ENCODE measurements at regions of chr7 and their contacts with region 1.

Region 1: GRCh38 chr7:156969972-156970420 is 20.5 kb downstream of the NOM1 start:
- DNase-seq: no peak
- H3K4me3 Mint-ChIP-seq: no peak overlapping the region
- H3K27ac Mint-ChIP-seq: no peak overlapping the region
- H3K4me1 Mint-ChIP-seq: no peaks in the 10 kb centered on the region
- H3K27me3 Mint-ChIP-seq: no peaks in the 10 kb centered on the region

Region 2: GRCh38 chr7:156725077-156725476 is 244.9 kb before region 1 on chr7:
- CTCF ChIA-PET with region 1: no interaction called
- POLR2A ChIA-PET with region 1: no interaction called
- DNase-seq: no peak
- H3K4me3 Mint-ChIP-seq: no peak overlapping the region
- H3K27ac Mint-ChIP-seq: no peak overlapping the region
- H3K4me1 Mint-ChIP-seq: peaks cover 3% of the 10 kb centered on the region
- H3K27me3 Mint-ChIP-seq: no peaks in the 10 kb centered on the region

Region 3: DNA sequence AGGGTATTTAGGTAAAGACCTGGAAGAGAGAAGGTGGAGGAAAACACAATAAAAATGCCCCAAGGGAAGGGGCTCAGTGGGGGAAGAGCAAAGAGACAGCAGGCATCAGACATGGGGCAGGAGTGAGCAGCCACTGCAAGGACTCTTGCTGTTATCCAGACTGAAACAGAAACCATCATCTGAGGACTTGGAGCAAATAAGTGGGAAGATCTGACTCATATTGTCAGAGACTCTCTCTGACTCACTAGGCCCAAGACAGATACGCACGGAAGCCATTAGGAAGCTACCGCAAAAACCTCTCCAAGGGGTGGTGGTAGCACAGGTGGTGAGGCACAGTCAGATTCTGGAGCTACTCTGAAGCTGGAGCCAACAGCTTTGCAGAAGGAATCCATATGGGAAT is 218.7 kb before region 1 on chr7:
- CTCF ChIA-PET with region 1: no interaction called
- POLR2A ChIA-PET with region 1: no interaction called
- DNase-seq: peak; percentile 70
- H3K4me3 Mint-ChIP-seq: no peak overlapping the region
- H3K27ac Mint-ChIP-seq: peak overlapping the region; percentile 33
- H3K4me1 Mint-ChIP-seq: peaks cover 10% of the 10 kb centered on the region
- H3K27me3 Mint-ChIP-seq: no peaks in the 10 kb centered on the region

Region 4: DNA sequence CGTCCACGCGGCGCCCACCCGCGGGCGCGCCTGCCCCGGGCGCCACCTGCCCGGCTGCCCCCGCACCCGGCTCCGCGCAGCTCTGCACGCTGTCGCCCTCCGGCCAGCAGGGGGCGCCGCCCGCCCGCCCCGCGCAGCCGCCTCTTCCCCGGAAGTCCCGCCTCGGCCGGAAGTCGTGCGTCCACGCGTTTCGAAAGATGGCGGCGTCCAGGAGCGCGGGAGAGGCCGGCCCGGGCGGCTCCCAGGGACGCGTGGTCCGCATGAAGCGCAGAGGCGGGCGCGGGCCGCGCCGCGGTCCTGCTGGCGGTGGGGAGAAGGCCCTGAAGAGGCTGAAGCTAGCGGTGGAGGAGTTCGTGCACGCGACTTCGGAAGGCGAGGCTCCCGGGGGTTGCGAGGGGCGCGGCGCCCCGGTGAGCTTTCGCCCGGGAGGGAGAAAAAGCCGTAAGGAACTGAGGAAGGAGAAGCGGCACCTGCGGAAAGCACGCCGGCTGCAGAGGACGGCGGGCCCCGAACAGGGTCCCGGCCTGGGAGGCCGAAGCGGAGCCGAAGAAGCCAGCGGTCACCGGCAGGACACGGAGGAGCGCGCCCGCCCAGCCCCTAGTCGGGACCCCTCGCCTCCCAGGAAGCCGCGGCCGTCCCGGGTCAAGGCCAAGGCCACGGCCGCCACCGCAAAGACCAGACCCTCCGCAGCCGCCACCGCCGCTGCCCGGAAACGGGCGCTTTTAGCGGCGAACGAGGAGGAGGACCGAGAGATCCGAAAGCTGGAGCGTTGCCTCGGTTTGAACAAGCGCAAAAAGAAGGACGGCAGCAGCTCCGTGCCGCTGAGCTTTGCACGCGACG is 20.2 kb before region 1 on chr7 and contains the start of gene NOM1:
- CTCF ChIA-PET with region 1: interaction called, 12 read pairs
- POLR2A ChIA-PET with region 1: interaction called, 8 read pairs
- DNase-seq: peak; percentile 92
- H3K4me3 Mint-ChIP-seq: peak within 1 kb of the TSS; percentile 100
- H3K27ac Mint-ChIP-seq: peak within 1 kb of the TSS; percentile 85
- H3K4me1 Mint-ChIP-seq: peaks cover 38% of the 10 kb centered on the region
- H3K27me3 Mint-ChIP-seq: peaks cover 21% of the 10 kb centered on the region
- total RNA-seq, gene NOM1: 22.1 to 22.8 TPM